ENCODE measurements at regions of chr21 and their contacts with region 1.

Region 1: DNA sequence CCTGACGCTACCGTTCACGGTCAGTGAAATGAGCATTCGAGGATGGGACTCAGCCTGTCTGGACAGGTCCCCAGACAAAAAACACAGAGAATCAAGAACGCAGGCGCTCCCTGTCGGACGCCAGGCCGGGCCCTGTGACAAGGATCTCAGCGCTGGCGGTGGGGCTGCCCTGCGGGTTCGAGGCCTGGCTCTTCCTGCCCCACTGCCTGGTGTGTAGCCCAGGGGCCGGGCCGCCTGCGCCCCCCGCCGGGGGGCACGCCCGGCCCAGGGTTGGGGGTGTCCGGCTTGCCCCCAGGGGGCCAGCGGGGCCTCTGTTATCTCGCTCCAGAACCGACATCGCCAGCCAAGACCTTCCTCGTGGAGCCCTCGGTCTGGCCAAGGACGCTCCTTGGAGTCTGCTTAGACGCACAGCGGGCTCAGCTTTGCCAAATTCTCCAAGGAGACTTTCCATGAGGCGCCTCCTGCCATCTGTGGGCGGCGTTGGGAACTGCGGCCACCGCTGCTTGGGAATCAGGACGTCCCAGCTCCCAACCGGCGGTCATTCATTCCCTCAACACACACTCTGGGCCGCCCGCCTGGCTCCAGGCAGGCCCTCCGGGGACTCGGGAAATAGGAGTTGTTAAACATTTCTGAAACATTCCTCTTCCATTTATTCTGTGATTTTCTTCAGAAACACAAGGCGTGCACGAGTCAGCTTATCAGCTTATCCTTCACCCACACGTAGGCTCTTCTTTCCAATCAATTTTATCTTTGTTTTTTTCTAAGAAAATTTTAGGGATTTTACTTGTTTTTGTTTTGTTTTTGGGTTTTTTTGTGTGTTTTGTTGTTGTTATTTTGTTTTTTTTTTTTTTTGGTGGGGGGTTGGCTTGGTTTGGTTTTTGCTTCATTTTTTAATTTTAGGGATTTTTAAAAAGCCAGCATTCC is 11.4 kb upstream of the RIPK4 start:
- DNase-seq: peak; percentile 93 to 97 (median 94)
- ATAC-seq: peak; percentile 90
- H3K4me3 ChIP-seq: no peak overlapping the region
- H3K27ac ChIP-seq: peak overlapping the region; percentile 58 to 79 (median 66)
- H3K4me1 ChIP-seq: peaks cover 29% of the 10 kb centered on the region
- H3K27me3 ChIP-seq: no peaks in the 10 kb centered on the region
- CTCF ChIP-seq: peak; percentile 93 to 97 (median 94)
- POLR2A ChIP-seq: no peak

Region 2: DNA sequence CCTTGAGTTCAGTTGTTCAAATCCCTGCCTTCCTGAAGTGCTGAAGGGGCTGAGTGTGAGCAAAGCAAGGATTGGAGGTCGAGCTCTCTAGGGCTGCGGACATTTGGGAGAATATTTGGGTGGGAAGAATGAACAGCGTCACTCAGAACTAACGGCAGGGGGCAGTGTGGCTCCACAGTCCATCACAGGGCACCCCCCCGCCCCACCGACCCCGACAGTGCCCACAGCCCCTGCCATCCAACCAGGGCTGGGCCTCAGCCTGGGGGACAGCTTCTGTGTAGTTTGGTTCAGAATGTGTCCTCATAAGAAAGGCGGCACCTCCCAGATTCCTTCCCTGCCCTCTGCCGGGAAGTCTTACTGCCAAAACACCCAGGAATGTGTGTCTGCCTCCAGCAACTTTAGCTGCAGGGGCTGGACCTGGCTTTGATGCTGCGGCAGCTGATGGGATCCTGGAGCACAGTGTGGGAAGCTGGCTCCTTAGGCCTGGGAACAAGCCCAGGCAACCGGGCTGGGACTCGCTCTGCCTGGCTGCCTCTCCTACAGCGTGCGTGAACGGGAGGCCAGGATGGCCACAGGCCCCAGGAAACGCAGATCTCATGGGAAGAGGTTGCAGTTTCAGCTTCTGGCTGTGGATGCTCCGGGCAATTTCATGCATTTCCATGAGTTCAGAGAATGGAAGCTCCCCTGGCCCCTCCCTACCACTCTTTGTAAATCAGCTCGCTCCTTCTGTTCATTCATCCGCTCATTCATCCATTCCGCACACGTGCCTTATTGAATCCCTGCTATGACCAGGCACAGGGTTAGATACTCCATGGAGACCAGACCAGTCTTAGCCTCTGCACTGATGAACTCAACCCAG is 165.3 kb before region 1 on chr21:
- intact Hi-C with region 1: loop called (anchors 5 kb)
- DNase-seq: peak; percentile 65 to 73 (median 69)
- ATAC-seq: peak; percentile 80
- H3K4me3 ChIP-seq: no peak overlapping the region
- H3K27ac ChIP-seq: peak overlapping the region in 3 of 4 donors; percentile 9 to 38 (median 36)
- H3K4me1 ChIP-seq: peaks cover 21% of the 10 kb centered on the region
- H3K27me3 ChIP-seq: no peaks in the 10 kb centered on the region
- CTCF ChIP-seq: peak; percentile 63 to 86 (median 78)
- POLR2A ChIP-seq: no peak

Region 3: GRCh38 chr21:41993744-41994143 is 215.5 kb after region 1 on chr21:
- intact Hi-C with region 1: no loop called
- DNase-seq: peak in 1 of 4 donors; percentile 19
- ATAC-seq: peak; percentile 18
- H3K4me3 ChIP-seq: no peak overlapping the region
- H3K27ac ChIP-seq: no peak overlapping the region
- H3K4me1 ChIP-seq: no peaks in the 10 kb centered on the region
- H3K27me3 ChIP-seq: no peaks in the 10 kb centered on the region
- CTCF ChIP-seq: no peak
- POLR2A ChIP-seq: no peak

Region 4: DNA sequence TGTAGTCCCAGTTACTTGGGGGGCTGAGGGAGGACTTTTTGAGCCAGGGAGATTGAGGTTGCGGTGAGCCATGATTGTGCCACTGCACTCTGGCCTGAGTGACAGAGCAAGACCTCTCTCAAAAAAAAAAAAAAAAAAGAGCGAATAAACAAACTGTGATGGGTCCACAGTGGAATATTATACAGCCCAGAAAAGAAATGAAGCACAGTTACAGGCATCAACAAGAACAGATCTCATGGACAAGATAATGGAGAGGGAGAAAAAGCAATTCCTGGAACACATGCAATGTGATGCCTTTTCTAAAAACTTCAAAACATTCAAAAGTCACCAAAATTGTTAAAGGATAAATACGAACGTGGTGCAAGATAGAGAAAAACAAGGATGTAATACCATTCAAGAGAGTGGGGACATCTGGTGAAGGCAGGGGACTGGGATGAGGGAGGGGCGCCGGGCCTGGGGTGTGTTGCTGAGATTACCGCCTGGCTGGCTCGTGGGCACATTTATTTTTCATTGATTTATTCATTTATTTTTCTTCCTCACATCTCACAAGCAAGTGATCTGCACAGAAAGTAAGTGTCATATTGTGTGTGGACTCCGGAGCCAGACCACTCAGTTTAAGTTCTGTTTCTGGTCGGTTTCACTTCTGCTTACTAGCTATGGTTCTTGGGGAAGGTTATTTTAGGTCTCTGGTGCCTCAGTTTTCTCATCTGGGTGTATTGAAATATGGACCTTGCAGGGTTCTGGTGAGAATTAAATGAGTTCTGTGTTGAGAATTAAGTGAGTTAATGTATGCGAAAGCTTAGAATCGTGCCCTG is 470.8 kb after region 1 on chr21:
- intact Hi-C with region 1: no loop called
- DNase-seq: peak in 1 of 4 donors; percentile 19
- ATAC-seq: no peak
- H3K4me3 ChIP-seq: no peak overlapping the region
- H3K27ac ChIP-seq: no peak overlapping the region
- H3K4me1 ChIP-seq: no peaks in the 10 kb centered on the region
- H3K27me3 ChIP-seq: no peaks in the 10 kb centered on the region
- CTCF ChIP-seq: no peak
- POLR2A ChIP-seq: no peak

Measured in body of pancreas (tissue), 4 donors.